ENCODE measurements at regions of chrX and their contacts with region 1.

Region 1: GRCh38 chrX:51215259-51215658 is 117.4 kb upstream of the NUDT10 start:
- DNase-seq: no peak
- H3K4me3 Mint-ChIP-seq: no peak overlapping the region
- H3K27ac Mint-ChIP-seq: no peak overlapping the region
- H3K4me1 Mint-ChIP-seq: no peaks in the 10 kb centered on the region
- H3K27me3 Mint-ChIP-seq: no peaks in the 10 kb centered on the region
- CTCF ChIP-seq: no peak

Region 2: GRCh38 chrX:51847463-51847862 is 632.2 kb after region 1 on chrX:
- CTCF ChIA-PET with region 1: no interaction called
- intact Hi-C with region 1: loop called (anchors 10 kb)
- DNase-seq: no peak
- H3K4me3 Mint-ChIP-seq: no peak overlapping the region
- H3K27ac Mint-ChIP-seq: no peak overlapping the region
- H3K4me1 Mint-ChIP-seq: no peaks in the 10 kb centered on the region
- H3K27me3 Mint-ChIP-seq: no peaks in the 10 kb centered on the region
- CTCF ChIP-seq: no peak

Measured in Calu3 (cell line).